ENCODE measurements at regions of chr17 and their contacts with region 1.

Region 1: DNA sequence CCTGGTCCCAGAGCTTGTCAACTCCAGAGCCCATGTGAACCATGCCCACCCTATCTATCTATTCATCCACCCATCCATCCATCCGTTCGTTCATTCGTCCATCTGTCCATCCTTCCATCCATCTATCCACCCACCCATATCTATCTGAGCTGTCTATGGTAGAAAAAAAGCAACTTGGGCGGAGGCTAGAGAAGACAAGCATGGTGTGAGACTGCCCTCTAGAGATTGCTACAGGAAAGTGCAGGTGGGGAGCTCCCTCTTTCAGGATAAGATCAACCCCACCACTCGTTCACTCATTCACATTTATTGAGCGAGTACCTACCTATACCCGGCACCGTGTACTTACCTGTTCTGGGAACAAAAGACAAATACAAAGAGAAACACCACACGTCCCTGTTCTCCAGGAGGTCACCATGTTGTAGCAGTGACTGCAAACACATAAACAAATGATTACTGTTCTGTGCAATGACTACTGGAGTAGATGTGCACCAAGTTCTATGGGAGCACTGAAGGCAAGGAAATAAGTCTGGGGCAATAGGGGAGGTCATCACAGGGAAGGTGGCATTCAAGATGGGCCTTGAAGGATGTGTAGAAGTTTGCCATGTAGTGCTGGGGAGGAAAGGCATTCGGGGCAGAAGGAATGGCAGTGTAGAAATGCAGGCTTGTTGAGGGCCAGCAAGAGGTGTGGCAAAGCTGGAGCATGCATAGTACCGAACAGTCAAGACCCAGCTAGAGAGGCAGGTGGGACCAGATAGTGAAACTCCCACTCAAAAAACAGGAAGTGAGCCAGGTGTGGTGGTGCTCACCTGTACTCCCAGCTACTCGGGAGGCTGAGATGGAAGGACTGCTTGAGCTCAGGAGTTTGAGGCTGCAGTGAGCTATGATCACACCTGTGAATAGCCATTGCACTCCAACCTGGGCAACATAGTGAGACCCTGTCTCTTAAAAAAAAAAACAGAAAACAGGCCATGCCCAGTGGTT is 13.4 kb upstream of the ATP5MC1 start:
- DNase-seq: peak; percentile 81 to 90 (median 86)
- ATAC-seq: peak; percentile 87
- H3K4me3 ChIP-seq: no peak overlapping the region
- H3K27ac ChIP-seq: no peak overlapping the region
- H3K4me1 ChIP-seq: 0 out of 5 replicates have a peak, but pooled peaks cover 0 to 3% of the 10 kb centered on the region in 2 experiments
- H3K27me3 ChIP-seq: peaks cover 12 to 42% of the 10 kb centered on the region in 2 experiments; a peak in 4 of 5 replicates
- CTCF ChIP-seq: peak; percentile 93 to 97 (median 97)
- EP300 ChIP-seq: no peak
- POLR2A ChIP-seq: no peak
- RAD21 ChIP-seq: peak; percentile 93 to 96

Region 2: GRCh38 chr17:48671697-48672171 is 207.5 kb before region 1 on chr17:
- CTCF ChIA-PET with region 1: interaction called, 24 read pairs
- POLR2A ChIA-PET with region 1: no interaction called
- in situ Hi-C with region 1: no loop called
- intact Hi-C with region 1: loop called (anchors 2 kb)
- DNase-seq: peak; percentile 70 to 80 (median 74)
- ATAC-seq: peak; percentile 93
- H3K4me3 ChIP-seq: 0 out of 2 replicates have a peak overlapping the region, but pooled peaks have one; percentile 10
- H3K27ac ChIP-seq: no peak overlapping the region
- H3K4me1 ChIP-seq: no peaks in the 10 kb centered on the region
- H3K27me3 ChIP-seq: peaks cover 0 to under 1% of the 10 kb centered on the region in 2 experiments; a peak in 1 of 5 replicates
- CTCF ChIP-seq: peak; percentile 86 to 91 (median 87)
- EP300 ChIP-seq: no peak
- POLR2A ChIP-seq: no peak
- RAD21 ChIP-seq: peak; percentile 79 to 84

Region 3: GRCh38 chr17:48678141-48678971 is 200.9 kb before region 1 on chr17:
- CTCF ChIA-PET with region 1: interaction called, 22 read pairs
- POLR2A ChIA-PET with region 1: interaction called, 3 read pairs
- in situ Hi-C with region 1: loop called (anchors 5 kb)
- intact Hi-C with region 1: loop called (anchors 2 kb)
- DNase-seq: peak; percentile 82 to 87 (median 85)
- ATAC-seq: peak; percentile 99
- H3K4me3 ChIP-seq: no peak overlapping the region
- H3K27ac ChIP-seq: no peak overlapping the region
- H3K4me1 ChIP-seq: peaks cover 0 to 8% of the 10 kb centered on the region in 2 experiments; a peak in 2 of 5 replicates
- H3K27me3 ChIP-seq: peaks cover 20 to 21% of the 10 kb centered on the region in 2 experiments; a peak in 4 of 5 replicates
- CTCF ChIP-seq: peak; percentile 96 to 99 (median 98)
- EP300 ChIP-seq: no peak
- POLR2A ChIP-seq: no peak
- RAD21 ChIP-seq: peak; percentile 85 to 90

Region 4: GRCh38 chr17:48724251-48725003 is 154.8 kb before region 1 on chr17:
- CTCF ChIA-PET with region 1: interaction called, 21 read pairs
- POLR2A ChIA-PET with region 1: interaction called, 7 read pairs
- in situ Hi-C with region 1: no loop called
- intact Hi-C with region 1: loop called (anchors 1 kb)
- DNase-seq: peak; percentile 57 to 76 (median 61)
- ATAC-seq: peak; percentile 96
- H3K4me3 ChIP-seq: no peak overlapping the region
- H3K27ac ChIP-seq: no peak overlapping the region
- H3K4me1 ChIP-seq: peaks cover 0 to 24% of the 10 kb centered on the region in 2 experiments; a peak in 2 of 5 replicates
- H3K27me3 ChIP-seq: peaks cover 68 to 84% of the 10 kb centered on the region in 2 experiments
- CTCF ChIP-seq: peak; percentile 79 to 84 (median 80)
- EP300 ChIP-seq: no peak
- POLR2A ChIP-seq: no peak
- RAD21 ChIP-seq: peak; percentile 46 to 73

Region 5: GRCh38 chr17:48804925-48805411 is 74.2 kb before region 1 on chr17:
- CTCF ChIA-PET with region 1: interaction called, 65 read pairs
- POLR2A ChIA-PET with region 1: interaction called, 4 read pairs
- in situ Hi-C with region 1: loop called (anchors 5 kb)
- intact Hi-C with region 1: loop called (anchors 1 kb)
- DNase-seq: peak; percentile 64 to 86 (median 84)
- ATAC-seq: peak; percentile 97
- H3K4me3 ChIP-seq: no peak overlapping the region
- H3K27ac ChIP-seq: no peak overlapping the region
- H3K4me1 ChIP-seq: no peaks in the 10 kb centered on the region
- H3K27me3 ChIP-seq: peaks cover 27 to 33% of the 10 kb centered on the region in 2 experiments
- CTCF ChIP-seq: peak; percentile 83 to 93 (median 92)
- EP300 ChIP-seq: no peak
- POLR2A ChIP-seq: no peak
- RAD21 ChIP-seq: peak; percentile 84 to 92

Region 6: GRCh38 chr17:48816774-48817590 is 62.2 kb before region 1 on chr17 and contains the start of gene TTLL6:
- CTCF ChIA-PET with region 1: interaction called, 43 read pairs
- POLR2A ChIA-PET with region 1: interaction called, 7 read pairs
- in situ Hi-C with region 1: no loop called
- intact Hi-C with region 1: loop called (anchors 1 kb)
- DNase-seq: peak; percentile 93 to 97 (median 96)
- ATAC-seq: peak; percentile 100
- H3K4me3 ChIP-seq: peak within 1 kb of the TSS; percentile 33
- H3K27ac ChIP-seq: no peak within 1 kb of the TSS
- H3K4me1 ChIP-seq: peaks cover 0 to 11% of the 10 kb centered on the region in 2 experiments; a peak in 3 of 5 replicates
- H3K27me3 ChIP-seq: peaks cover 14 to 39% of the 10 kb centered on the region in 2 experiments
- CTCF ChIP-seq: no peak
- EP300 ChIP-seq: no peak
- POLR2A ChIP-seq: no peak
- RAD21 ChIP-seq: no peak
- polyA plus RNA-seq, gene TTLL6: not detected

Region 7: DNA sequence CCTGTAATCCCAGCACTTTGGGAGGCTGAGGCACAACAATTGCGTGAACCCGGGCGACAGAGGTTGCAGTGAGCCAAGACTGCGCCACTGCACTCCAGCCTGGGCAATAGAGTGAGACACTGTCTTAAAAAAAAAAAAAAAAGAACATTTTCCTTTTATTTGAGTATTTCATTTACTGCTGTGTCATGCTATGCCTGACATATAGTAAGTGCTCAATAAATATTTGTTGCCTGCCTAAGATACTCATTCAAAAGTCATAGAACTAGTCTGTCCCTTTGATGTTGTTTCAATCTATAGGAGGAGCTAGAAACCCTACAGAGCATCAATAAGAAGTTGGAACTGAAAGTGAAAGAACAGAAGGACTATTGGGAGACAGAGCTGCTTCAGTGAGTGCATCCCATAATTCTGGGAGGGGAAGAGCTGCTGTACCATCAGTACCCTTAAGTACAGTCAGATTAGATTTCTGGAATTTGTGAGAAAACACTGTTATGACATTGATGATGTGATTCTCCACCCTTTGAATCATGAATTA is 28.4 kb before region 1 on chr17:
- CTCF ChIA-PET with region 1: no interaction called
- POLR2A ChIA-PET with region 1: no interaction called
- in situ Hi-C with region 1: no loop called
- intact Hi-C with region 1: no loop called
- DNase-seq: no peak
- ATAC-seq: no peak
- H3K4me3 ChIP-seq: no peak overlapping the region
- H3K27ac ChIP-seq: no peak overlapping the region
- H3K4me1 ChIP-seq: peaks cover 0 to 10% of the 10 kb centered on the region in 2 experiments; a peak in 1 of 5 replicates
- H3K27me3 ChIP-seq: no peaks in the 10 kb centered on the region
- CTCF ChIP-seq: no peak
- EP300 ChIP-seq: no peak
- POLR2A ChIP-seq: no peak
- RAD21 ChIP-seq: no peak

Region 8: DNA sequence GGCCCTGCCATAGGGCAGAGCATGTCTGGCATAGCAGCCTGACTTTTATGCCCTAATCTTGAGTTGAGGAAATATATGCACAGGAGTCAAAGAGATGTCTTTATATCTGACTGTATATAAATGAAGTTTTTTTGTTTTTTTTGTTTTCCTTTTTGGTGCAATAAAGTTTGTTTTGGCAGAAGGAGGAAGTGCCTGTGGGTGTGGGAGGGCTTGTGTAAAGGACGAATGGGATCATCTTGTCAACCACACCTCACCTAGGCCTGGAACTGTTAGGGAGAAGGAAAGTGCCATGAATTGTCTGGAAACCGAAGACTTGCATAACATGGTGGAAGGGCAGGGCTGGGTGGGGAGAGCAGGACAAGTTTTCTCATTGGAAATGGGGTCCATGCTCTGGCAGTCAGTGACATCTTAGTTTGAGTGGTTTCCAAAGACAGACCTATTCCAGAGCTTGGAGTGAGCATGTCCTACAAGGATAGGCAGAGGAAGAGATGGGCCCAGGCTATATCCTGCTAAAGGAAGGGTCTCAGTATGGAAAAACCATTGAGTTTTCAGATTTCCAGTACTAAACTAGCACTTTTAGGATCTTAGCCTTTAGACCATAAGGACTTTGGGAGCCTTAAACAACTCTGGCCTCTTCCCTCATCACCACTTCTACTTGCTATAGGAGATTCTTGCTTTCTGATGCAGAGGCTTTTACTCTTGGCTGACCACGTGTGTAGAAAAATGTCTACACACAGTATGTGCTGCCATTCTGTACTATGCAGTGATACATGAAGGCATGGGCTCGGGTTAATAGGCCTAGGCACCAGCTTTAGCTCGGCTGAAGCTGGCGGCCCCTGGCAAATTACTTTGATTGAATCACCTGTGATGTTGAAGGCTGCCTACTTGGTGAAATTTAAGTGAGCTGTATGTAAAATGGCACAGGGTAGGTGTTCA is 49.9 kb after region 1 on chr17:
- CTCF ChIA-PET with region 1: no interaction called
- POLR2A ChIA-PET with region 1: no interaction called
- in situ Hi-C with region 1: no loop called
- intact Hi-C with region 1: no loop called
- DNase-seq: no peak
- ATAC-seq: peak; percentile 39
- H3K4me3 ChIP-seq: no peak overlapping the region
- H3K27ac ChIP-seq: no peak overlapping the region
- H3K4me1 ChIP-seq: no peaks in the 10 kb centered on the region; a peak in 1 of 5 replicates
- H3K27me3 ChIP-seq: no peaks in the 10 kb centered on the region
- CTCF ChIP-seq: no peak
- EP300 ChIP-seq: no peak
- POLR2A ChIP-seq: peak; percentile 63
- RAD21 ChIP-seq: no peak